Prostate gland (tissue), 2 donors: ENCODE measurements at regions of chr11 and their contacts with region 1.

Region 1: DNA sequence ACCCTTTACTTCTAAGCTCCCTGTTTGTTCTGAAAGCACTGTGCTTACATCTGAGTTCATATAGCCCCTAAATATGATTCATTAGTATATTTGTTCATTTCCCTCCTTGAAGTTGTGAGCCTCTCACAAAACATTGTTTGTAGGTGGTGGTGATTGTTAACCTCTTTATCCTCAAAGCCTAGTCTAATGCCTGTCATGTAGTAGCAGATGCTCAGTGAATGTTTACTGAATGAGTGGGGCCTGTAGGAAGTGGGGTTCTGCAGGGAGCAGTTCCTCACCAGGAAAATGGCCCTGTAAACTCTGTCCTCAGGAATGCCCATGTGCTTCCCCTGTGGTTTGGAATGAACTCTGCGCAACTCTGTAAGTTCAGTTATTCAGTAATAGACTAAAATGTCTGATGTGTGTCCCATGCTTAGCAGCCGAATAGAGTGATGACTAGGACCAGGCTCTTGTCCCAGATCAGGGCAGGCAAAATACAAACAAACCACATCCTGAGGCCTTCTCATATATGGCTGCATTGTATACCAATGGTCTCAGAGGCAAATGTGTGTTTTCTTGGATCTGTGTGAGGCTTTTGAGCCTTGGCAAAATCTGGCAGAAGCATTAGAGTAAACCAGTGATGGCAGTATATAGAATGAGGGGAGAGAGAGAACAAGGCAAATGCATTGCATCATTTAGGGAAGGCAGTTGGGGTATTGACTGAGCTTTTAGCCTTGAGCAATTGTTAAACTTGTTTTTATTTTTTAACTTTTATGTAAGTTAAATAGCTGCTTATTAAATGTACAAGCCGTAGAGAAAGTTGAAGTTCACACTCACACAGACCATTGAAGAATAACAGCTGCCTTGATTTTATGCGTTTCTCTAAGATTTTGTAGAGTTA is 91.4 kb upstream of the BIRC3 start:
- DNase-seq: no peak
- H3K4me3 ChIP-seq: no peak overlapping the region
- H3K27ac ChIP-seq: peak overlapping the region; percentile 35 to 42
- H3K4me1 ChIP-seq: peaks cover 3% of the 10 kb centered on the region
- H3K27me3 ChIP-seq: no peaks in the 10 kb centered on the region
- CTCF ChIP-seq: no peak
- POLR2A ChIP-seq: no peak

Region 2: GRCh38 chr11:102109896-102110760 is 115.8 kb before region 1 on chr11 and contains the start of gene YAP1:
- intact Hi-C with region 1: loop called (anchors 10 kb)
- DNase-seq: peak; percentile 86
- H3K4me3 ChIP-seq: peak within 1 kb of the TSS; percentile 73 to 96
- H3K27ac ChIP-seq: peak within 1 kb of the TSS; percentile 96 to 99
- H3K4me1 ChIP-seq: no peaks in the 10 kb centered on the region
- H3K27me3 ChIP-seq: no peaks in the 10 kb centered on the region
- CTCF ChIP-seq: peak in 2 of 4 experiments; percentile 12 to 38
- POLR2A ChIP-seq: peak; percentile 75
- total RNA-seq, gene YAP1: 137 to 210 TPM